ENCODE measurements at regions of chr9 and their contacts with region 1.

Region 1: GRCh38 chr9:69759421-69760277 is at the start of gene PTAR1:
- DNase-seq: peak; percentile 61 to 92
- H3K4me3 ChIP-seq: peak within 1 kb of the TSS; percentile 67
- H3K27ac ChIP-seq: peak within 1 kb of the TSS; percentile 71
- H3K4me1 ChIP-seq: peaks cover 15% of the 10 kb centered on the region
- H3K27me3 ChIP-seq: no peaks in the 10 kb centered on the region
- CTCF ChIP-seq: no peak
- total RNA-seq, gene PTAR1: 44.9 and 47.3 TPM in 2 replicates

Region 2: GRCh38 chr9:69885474-69885929 is 125.9 kb after region 1 on chr9:
- CTCF ChIA-PET with region 1: no interaction called
- POLR2A ChIA-PET with region 1: no interaction called
- intact Hi-C with region 1: loop called (anchors 5 kb)
- DNase-seq: peak; percentile 73 to 92
- H3K4me3 ChIP-seq: no peak overlapping the region
- H3K27ac ChIP-seq: peak overlapping the region; percentile 74
- H3K4me1 ChIP-seq: peaks cover 40% of the 10 kb centered on the region
- H3K27me3 ChIP-seq: no peaks in the 10 kb centered on the region
- CTCF ChIP-seq: no peak